Activated T-helper 2 cell treated with anti-CD3 and anti-CD28 coated beads, Interferon-gamma antibody, Interleukin-2, Interleukin-4, amounts not matched to agents 10 μg/mL and 5 μg/mL and 100 μg/mL, durations not matched to agents 14 hours and 24 hours and 36 hours (primary cell): ENCODE measurements at regions of chr15 and their contacts with region 1.

Region 1: GRCh38 chr15:59020322-59020721 is 32.9 kb downstream of the RNF111 start:
- DNase-seq: no peak
- H3K4me3 Mint-ChIP-seq: no peak overlapping the region
- H3K27ac Mint-ChIP-seq: no peak overlapping the region
- H3K4me1 Mint-ChIP-seq: peaks cover 4% of the 10 kb centered on the region
- H3K27me3 Mint-ChIP-seq: no peaks in the 10 kb centered on the region

Region 2: DNA sequence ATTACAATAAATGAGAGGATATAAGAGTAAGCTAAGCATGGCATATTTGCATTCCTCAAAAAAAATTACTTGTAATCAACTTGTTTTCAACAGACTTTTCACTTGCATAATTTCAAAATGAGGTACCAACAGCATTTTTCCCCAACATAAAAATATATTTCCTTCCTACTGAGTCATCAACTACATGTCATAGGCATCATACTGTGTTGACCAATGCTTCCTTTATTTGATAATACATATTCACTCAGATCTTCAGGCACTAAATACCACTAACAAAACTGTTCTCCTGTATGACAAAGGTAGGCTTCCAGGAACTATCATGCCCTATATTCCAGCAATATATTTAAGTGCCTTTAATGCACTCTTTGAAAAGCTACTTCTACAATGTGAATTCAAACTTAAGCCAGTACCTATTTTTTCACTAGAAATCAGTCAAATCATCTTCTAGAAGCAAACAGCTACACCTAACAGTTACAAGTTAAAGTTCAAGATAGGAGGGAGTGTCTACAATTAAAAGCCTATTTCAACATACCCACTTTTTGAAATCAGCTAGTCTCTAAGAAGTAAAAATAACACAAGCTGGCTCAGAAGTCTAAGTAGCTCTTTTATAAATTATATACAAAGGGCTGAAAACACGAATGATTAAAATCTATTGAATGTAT is 282.1 kb before region 1 on chr15:
- intact Hi-C with region 1: no loop called
- DNase-seq: no peak
- H3K4me3 Mint-ChIP-seq: peak overlapping the region; percentile 9
- H3K27ac Mint-ChIP-seq: peak overlapping the region; percentile 70
- H3K4me1 Mint-ChIP-seq: peaks cover 61% of the 10 kb centered on the region
- H3K27me3 Mint-ChIP-seq: no peaks in the 10 kb centered on the region

Region 3: DNA sequence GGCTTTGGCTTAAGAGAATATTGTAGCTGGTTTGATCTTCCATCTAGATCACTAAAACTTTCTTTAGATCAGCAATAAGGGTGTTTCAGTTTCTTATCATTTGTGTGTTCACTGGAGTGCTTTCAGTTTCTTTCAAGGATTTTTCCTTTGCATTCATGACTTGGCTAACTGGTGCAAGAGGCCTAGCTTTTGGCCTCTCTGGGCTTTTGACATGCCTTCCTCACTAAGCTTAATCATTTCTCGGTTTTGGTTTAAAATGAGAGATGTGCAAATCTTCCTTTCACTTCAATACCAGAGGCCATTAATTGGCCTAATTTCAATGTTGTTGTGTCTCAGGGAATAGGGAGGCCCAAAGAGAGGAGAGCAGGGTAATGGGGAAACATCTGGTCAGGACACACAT is 54.3 kb after region 1 on chr15:
- intact Hi-C with region 1: loop called (anchors 10 kb)
- DNase-seq: no peak
- H3K4me3 Mint-ChIP-seq: no peak overlapping the region
- H3K27ac Mint-ChIP-seq: peak overlapping the region; percentile 81
- H3K4me1 Mint-ChIP-seq: peaks cover 17% of the 10 kb centered on the region
- H3K27me3 Mint-ChIP-seq: no peaks in the 10 kb centered on the region